ENCODE measurements at regions of chr3 and their contacts with region 1.

Region 1: GRCh38 chr3:31132132-31132769 is 237.8 kb upstream of the GADL1 start:
- DNase-seq: no peak
- ATAC-seq: peak; percentile 74 to 87
- H3K4me3 ChIP-seq: no peak overlapping the region
- H3K27ac ChIP-seq: no peak overlapping the region
- H3K4me1 ChIP-seq: no peaks in the 10 kb centered on the region
- H3K27me3 ChIP-seq: no peaks in the 10 kb centered on the region
- CTCF ChIP-seq: peak; percentile 41 to 77 (median 72)
- POLR2A ChIP-seq: no peak

Region 2: GRCh38 chr3:30042274-30042859 is 1089.9 kb before region 1 on chr3:
- in situ Hi-C with region 1: no loop called
- intact Hi-C with region 1: loop called (anchors 10 kb)
- DNase-seq: peak; percentile 18 to 23
- ATAC-seq: peak in 1 of 2 donors; percentile 46
- H3K4me3 ChIP-seq: no peak overlapping the region
- H3K27ac ChIP-seq: no peak overlapping the region
- H3K4me1 ChIP-seq: peaks cover 0 to 4% of the 10 kb centered on the region in 2 donors
- H3K27me3 ChIP-seq: no peaks in the 10 kb centered on the region
- CTCF ChIP-seq: peak; percentile 63 to 78 (median 72)
- POLR2A ChIP-seq: no peak

Region 3: GRCh38 chr3:30768703-30769685 is 363.3 kb before region 1 on chr3:
- in situ Hi-C with region 1: loop called in 2 of 4 experiments (anchors 5 kb)
- intact Hi-C with region 1: loop called (anchors 1 kb)
- DNase-seq: peak; percentile 35 to 61
- ATAC-seq: peak; percentile 34 to 68
- H3K4me3 ChIP-seq: no peak overlapping the region
- H3K27ac ChIP-seq: no peak overlapping the region
- H3K4me1 ChIP-seq: peaks cover 10 to 24% of the 10 kb centered on the region in 2 donors
- H3K27me3 ChIP-seq: no peaks in the 10 kb centered on the region
- CTCF ChIP-seq: peak; percentile 47 to 83 (median 77)
- POLR2A ChIP-seq: no peak

Region 4: DNA sequence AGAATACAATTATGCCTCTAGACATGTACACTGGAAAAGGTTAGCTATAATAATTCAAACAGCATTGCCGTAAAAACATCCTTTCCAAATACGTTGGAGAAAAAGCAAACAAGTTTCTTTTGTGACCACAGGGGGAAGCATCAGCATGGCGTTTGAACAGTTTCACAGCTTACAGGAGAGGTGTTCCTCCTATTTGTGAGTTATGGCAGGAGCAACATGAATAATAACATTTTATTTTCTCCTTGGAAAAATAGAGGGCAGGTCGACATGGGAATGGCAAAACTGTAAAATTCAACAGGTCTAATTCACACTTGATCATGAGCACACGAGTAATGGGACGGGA is 198.1 kb before region 1 on chr3:
- in situ Hi-C with region 1: loop called in 1 of 4 experiments (anchors 10 kb)
- intact Hi-C with region 1: loop called (anchors 2 kb)
- DNase-seq: no peak
- ATAC-seq: no peak
- H3K4me3 ChIP-seq: peak overlapping the region in 2 of 4 donors; percentile 20 to 23
- H3K27ac ChIP-seq: no peak overlapping the region
- H3K4me1 ChIP-seq: peaks cover 0 to 5% of the 10 kb centered on the region in 2 donors
- H3K27me3 ChIP-seq: no peaks in the 10 kb centered on the region
- CTCF ChIP-seq: peak in 4 of 5 experiments; percentile 20 to 43 (median 34)
- POLR2A ChIP-seq: no peak

Region 5: DNA sequence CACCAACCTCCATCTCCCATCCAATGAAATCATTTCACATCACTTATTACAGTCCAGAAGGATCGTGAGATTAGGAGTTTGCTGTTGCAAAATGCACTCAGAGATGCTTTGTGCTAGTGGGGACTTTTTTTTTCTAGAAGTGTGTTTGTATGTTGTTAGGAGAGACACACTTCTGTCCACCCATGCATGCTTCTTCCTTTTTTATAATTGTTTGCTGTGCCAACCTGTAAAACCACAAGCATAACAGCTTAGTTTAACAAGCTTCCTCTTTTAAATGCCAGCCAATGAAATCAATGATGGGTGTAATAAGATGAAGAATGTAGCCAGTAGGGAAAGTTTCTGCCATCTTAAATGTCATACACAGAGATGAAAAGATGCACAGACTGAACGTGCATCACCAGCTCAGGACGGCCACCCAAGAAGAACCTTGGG is 94.9 kb after region 1 on chr3:
- in situ Hi-C with region 1: no loop called
- intact Hi-C with region 1: no loop called
- DNase-seq: no peak
- ATAC-seq: no peak
- H3K4me3 ChIP-seq: no peak overlapping the region
- H3K27ac ChIP-seq: no peak overlapping the region
- H3K4me1 ChIP-seq: no peaks in the 10 kb centered on the region
- H3K27me3 ChIP-seq: no peaks in the 10 kb centered on the region
- CTCF ChIP-seq: no peak
- POLR2A ChIP-seq: no peak